ENCODE measurements at regions of chr15 and their contacts with region 1.

Region 1: GRCh38 chr15:98568382-98569017 is 79.8 kb upstream of the IGF1R start:
- DNase-seq: no peak
- H3K4me3 ChIP-seq: no peak overlapping the region
- H3K27ac ChIP-seq: no peak overlapping the region
- H3K4me1 ChIP-seq: no peaks in the 10 kb centered on the region
- H3K27me3 ChIP-seq: peaks cover 37% of the 10 kb centered on the region
- CTCF ChIP-seq: peak; percentile 69

Region 2: GRCh38 chr15:99230867-99231266 is 662.4 kb after region 1 on chr15:
- CTCF ChIA-PET with region 1: no interaction called
- POLR2A ChIA-PET with region 1: interaction called, 10 read pairs
- intact Hi-C with region 1: no loop called
- DNase-seq: no peak
- H3K4me3 ChIP-seq: no peak overlapping the region
- H3K27ac ChIP-seq: no peak overlapping the region
- H3K4me1 ChIP-seq: no peaks in the 10 kb centered on the region
- H3K27me3 ChIP-seq: no peaks in the 10 kb centered on the region
- CTCF ChIP-seq: no peak